ENCODE measurements at regions of chr12 and their contacts with region 1.

Region 1: DNA sequence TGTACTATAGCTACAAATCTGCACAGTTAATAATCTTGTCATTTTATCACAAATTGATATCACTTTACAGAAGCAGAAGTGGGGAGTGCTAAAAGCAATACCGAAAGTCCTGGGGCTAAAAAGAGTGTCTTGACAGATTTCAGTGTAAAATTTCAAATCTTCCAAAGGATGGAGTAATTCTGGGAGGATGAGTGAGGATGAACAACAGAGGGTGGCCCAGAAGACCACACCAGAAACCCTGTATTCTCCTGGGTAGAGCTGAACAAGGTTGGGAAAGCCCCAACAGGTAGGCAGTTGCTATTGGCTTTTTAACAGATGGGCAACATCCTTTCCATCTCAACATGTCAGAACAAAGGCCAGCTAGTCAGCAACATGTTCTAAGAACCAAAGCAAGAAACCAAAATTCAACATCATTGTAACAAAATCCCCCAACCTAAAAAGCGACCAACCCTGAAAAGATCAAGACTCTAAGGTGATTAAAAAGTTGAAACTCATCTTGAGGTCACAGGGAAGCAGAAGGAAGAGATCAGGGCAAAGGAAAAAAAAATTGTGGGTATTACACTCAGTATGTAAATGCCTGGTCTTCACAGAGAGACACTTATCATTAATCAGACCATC is 38.8 kb downstream of the CBX5 start:
- DNase-seq: no peak
- ATAC-seq: no peak
- H3K4me3 ChIP-seq: no peak overlapping the region
- H3K27ac ChIP-seq: no peak overlapping the region
- H3K4me1 ChIP-seq: no peaks in the 10 kb centered on the region
- CTCF ChIP-seq: no peak
- EP300 ChIP-seq: no peak
- POLR2A ChIP-seq: no peak
- RAD21 ChIP-seq: no peak

Region 2: GRCh38 chr12:54259194-54260011 is 18.3 kb after region 1 on chr12:
- CTCF ChIA-PET with region 1: interaction called, 10 read pairs
- POLR2A ChIA-PET with region 1: no interaction called
- DNase-seq: peak; percentile 91 to 95
- ATAC-seq: peak; percentile 92 to 94
- H3K4me3 ChIP-seq: peak overlapping the region; percentile 34
- H3K27ac ChIP-seq: peak overlapping the region; percentile 79 to 95
- H3K4me1 ChIP-seq: peaks cover 55% of the 10 kb centered on the region
- CTCF ChIP-seq: no peak
- EP300 ChIP-seq: no peak
- POLR2A ChIP-seq: no peak
- RAD21 ChIP-seq: no peak

Measured in A549 (cell line).